ENCODE measurements at regions of chr14 and their contacts with region 1.

Region 1: GRCh38 chr14:64986578-64987571 is at the start of gene FNTB:
- DNase-seq: peak; percentile 94

Region 2: DNA sequence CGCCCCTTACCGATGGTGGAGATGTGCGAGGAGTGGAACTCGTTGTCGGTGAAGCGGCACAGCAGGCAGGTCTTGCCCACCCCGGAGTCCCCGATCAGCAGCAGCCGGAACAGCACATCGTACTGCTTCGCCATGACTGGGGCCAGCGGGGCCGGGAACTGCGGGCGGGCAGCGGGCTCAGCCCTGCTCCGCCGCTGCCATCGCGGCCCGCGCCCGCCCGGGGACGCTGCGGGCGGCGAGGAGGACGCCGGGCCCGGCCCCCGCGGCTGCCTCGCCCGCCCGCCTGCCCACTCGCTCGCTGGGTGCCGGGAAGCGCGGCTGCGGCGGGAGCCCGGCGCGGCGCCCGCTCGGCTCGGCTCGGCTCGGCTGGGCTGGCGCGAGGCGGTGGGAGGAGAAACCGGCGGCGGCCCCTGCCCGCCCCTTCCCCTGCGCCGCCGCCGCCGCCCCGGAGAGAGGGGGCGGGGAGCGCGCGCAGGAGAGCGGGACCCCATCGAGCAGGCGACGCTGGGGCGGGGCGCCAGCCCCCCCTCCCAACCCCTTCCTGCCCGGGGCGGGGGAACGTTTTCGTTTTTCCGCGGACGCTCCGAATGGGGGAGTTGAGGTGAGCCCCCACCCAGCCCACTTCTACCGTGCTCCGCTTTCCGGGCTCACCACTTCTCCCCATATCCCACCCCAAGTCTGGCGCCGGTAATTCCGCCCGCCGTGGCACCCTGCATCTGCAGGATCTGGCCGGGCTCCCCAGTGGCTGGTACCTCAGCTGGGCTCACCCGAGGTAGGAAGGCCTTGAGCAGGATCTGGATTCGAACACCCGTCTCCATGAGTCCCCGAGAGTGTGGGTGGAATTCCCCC is 14.7 kb before region 1 on chr14 and contains the start of gene RAB15:
- CTCF ChIA-PET with region 1: interaction called, 4 read pairs
- POLR2A ChIA-PET with region 1: interaction called, 13 read pairs
- DNase-seq: peak; percentile 62

Region 3: DNA sequence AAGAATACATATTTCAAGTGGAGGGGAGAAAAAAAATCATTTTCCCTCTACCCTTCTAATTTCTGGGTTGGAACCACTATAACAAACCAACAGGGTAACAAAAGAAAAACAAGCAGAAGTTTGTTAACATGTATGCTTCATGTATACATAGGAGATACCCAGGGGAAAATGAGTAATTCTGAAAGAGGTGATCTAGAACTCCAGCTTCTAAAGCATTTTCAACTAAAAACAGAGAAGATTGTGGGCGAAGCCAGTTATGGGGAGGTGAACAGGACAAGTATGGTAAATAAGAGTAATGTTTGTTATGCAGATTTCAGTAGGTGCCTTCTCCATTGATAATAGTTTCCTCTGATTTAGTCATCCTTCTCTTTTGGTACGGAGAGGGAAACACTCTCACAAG is 16.5 kb after region 1 on chr14:
- CTCF ChIA-PET with region 1: interaction called, 10 read pairs
- POLR2A ChIA-PET with region 1: interaction called, 20 read pairs
- DNase-seq: no peak